Transverse colon (tissue), 4 donors: ENCODE measurements at regions of chr22 and their contacts with region 1.

Region 1: DNA sequence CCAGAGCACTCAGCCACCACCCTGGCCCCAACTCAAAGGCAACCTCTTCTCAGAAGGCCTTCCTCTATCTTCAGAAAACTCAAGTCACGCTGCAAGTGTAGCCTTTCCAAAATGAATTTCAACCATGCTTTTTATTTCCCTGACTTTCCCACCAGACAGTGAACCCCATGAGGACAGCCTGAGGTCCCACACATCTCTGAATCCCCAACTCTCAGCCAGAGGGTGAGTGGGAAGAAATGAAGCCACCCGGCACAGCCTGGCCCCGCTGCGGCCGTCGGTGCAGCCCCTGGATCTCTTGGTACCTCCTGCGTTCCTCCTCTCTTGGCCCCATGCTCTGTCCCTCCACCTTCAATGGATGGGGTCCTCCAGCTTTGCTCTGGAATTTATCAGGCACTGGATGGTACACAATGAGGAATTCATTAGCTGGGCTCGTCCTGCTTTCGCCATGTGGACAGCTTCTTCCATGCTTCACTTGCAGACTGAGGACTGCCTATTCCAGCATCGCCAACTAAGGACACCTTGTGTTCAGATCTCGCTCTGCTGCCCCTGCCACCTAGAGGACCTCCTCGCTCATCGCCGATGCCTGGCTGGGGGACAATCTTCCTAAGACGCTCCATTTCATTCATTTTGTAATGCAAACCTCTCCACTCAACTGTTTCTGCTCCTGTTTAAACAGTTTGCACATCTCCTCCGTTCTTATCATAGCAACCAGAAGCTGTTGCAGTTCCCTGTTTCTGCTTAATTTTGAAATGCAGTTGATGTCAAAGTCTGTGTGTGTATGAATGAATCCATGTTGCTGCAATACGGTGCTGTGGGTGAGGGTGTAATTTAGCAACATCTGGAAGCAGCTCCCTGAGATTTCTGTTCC is 672.1 kb downstream of the TBC1D22A start:
- DNase-seq: no peak
- H3K4me3 ChIP-seq: no peak overlapping the region
- H3K27ac ChIP-seq: no peak overlapping the region
- H3K4me1 ChIP-seq: no peaks in the 10 kb centered on the region
- H3K27me3 ChIP-seq: no peaks in the 10 kb centered on the region
- CTCF ChIP-seq: no peak
- EP300 ChIP-seq: no peak
- POLR2A ChIP-seq: no peak

Region 2: GRCh38 chr22:46584081-46584921 is 850.3 kb before region 1 on chr22:
- in situ Hi-C with region 1: no loop called
- intact Hi-C with region 1: loop called (anchors 5 kb)
- DNase-seq: no peak
- H3K4me3 ChIP-seq: no peak overlapping the region
- H3K27ac ChIP-seq: peak overlapping the region; percentile 9 to 89 (median 86)
- H3K4me1 ChIP-seq: peaks cover 56 to 95% (median 83%) of the 10 kb centered on the region in 4 donors
- H3K27me3 ChIP-seq: no peaks in the 10 kb centered on the region
- CTCF ChIP-seq: no peak
- EP300 ChIP-seq: no peak
- POLR2A ChIP-seq: no peak